Sigmoid colon (tissue), 7 donors: ENCODE measurements at regions of chr2 and their contacts with region 1.

Region 1: GRCh38 chr2:46666044-46666679 is 186.8 kb downstream of the TMEM247 start:
- DNase-seq: peak; percentile 95
- H3K4me3 ChIP-seq: no peak overlapping the region
- H3K27ac ChIP-seq: peak overlapping the region; percentile 58 to 80 (median 78)
- H3K4me1 ChIP-seq: peaks cover 0 to 88% (median 78%) of the 10 kb centered on the region in 4 donors
- H3K27me3 ChIP-seq: no peaks in the 10 kb centered on the region
- CTCF ChIP-seq: no peak
- EP300 ChIP-seq: peak; percentile 60 to 90 (median 80)
- POLR2A ChIP-seq: no peak

Region 2: DNA sequence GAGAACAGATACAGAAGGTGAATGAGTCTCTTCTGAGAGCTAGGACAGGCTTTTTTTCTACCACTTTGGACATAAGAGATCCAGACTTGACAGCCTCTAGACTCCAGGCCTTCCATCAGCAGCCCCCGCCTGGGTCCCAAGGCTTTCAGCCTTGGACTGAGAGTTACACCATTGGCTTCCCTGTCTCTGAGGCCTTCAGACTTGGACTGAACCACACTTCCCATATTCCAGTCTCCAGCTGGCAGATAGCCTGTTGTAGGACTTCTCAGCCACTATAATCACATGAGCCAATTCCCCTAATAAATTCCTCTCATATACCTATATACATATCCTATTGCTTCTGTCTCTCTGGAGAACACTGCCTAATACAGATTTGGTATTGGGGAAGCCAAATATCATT is 121.2 kb after region 1 on chr2:
- intact Hi-C with region 1: no loop called
- DNase-seq: no peak
- H3K4me3 ChIP-seq: no peak overlapping the region
- H3K27ac ChIP-seq: no peak overlapping the region
- H3K4me1 ChIP-seq: peaks cover 0 to 3% (median 2%) of the 10 kb centered on the region in 4 donors
- H3K27me3 ChIP-seq: no peaks in the 10 kb centered on the region
- CTCF ChIP-seq: no peak
- EP300 ChIP-seq: no peak
- POLR2A ChIP-seq: no peak

Region 3: DNA sequence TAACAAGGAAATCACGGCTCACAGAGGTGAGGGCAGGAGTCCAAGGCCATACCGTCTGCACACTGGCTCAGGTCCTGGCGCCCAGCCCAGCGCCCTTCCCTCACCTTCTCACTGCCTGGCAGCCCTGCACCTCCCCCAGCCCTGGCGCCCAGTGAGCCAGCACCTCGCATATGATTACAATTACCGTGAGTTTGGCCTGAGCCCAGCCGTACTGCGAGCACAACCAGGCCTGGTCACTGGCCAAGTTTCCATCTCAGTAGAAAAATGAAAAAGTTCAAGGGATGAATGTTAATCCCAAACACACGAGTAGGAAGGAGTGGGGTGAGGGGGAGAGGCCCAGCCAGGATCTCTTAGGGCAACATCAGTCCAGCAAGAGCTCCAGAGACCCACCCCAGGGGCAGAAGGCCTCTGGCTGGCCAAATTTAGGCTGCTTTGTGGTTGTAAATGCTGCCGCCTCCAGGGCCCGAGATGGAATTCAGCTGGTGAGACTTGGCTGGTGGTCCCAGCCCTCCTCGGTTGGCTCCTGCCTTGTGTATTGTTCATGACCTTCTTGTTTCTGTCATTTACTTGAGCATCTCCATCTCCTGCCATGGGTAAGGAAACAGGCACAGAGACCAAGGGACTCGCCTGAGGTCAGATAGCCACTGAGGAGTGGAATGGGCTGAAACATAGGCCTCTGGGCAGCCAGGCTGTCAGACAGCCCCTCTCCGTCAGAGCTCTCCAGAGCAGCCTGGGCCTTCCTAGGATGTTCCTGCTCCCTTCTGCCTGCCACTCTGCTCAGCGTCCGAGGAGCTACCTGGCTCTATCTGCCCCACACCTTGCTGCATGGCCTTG is 181.3 kb after region 1 on chr2:
- intact Hi-C with region 1: loop called (anchors 2 kb)
- DNase-seq: peak; percentile 99
- H3K4me3 ChIP-seq: no peak overlapping the region
- H3K27ac ChIP-seq: peak overlapping the region; percentile 90 to 95 (median 94)
- H3K4me1 ChIP-seq: peaks cover 0 to 98% (median 80%) of the 10 kb centered on the region in 4 donors
- H3K27me3 ChIP-seq: no peaks in the 10 kb centered on the region
- CTCF ChIP-seq: no peak
- EP300 ChIP-seq: peak; percentile 71 to 96 (median 84)
- POLR2A ChIP-seq: no peak